Ascending aorta (tissue), 2 donors: ENCODE measurements at regions of chr18 and their contacts with region 1.

Region 1: DNA sequence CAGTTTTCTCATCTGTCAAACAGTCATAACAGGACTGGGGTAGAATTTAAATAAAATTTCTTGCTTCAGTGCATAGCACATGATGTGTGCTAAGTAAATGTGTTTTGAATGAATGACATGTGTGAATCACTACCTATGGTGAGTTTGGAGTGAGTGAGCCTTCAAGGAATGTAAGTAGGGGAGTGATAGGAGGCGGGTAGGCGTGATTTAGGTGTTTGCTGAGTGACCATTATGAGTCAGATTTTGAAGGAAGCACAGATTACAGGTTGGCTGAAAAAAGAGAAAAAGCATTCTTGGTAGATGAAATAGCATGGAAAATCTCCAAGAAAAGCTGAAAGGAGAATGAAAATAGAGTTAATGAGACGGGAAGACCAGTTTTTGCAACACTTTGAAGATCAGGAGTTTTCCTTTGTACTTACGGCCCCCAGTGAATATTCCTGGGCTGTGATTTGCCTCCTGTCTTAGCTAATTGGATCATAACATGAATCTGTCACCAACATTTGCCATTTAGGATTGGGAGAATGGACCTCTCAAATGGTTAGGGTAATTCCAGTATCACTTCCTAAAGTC is 136.9 kb upstream of the GATA6 start:
- DNase-seq: no peak
- H3K4me3 ChIP-seq: no peak overlapping the region
- H3K27ac ChIP-seq: no peak overlapping the region
- H3K4me1 ChIP-seq: no peaks in the 10 kb centered on the region
- H3K27me3 ChIP-seq: no peaks in the 10 kb centered on the region
- CTCF ChIP-seq: no peak

Region 2: DNA sequence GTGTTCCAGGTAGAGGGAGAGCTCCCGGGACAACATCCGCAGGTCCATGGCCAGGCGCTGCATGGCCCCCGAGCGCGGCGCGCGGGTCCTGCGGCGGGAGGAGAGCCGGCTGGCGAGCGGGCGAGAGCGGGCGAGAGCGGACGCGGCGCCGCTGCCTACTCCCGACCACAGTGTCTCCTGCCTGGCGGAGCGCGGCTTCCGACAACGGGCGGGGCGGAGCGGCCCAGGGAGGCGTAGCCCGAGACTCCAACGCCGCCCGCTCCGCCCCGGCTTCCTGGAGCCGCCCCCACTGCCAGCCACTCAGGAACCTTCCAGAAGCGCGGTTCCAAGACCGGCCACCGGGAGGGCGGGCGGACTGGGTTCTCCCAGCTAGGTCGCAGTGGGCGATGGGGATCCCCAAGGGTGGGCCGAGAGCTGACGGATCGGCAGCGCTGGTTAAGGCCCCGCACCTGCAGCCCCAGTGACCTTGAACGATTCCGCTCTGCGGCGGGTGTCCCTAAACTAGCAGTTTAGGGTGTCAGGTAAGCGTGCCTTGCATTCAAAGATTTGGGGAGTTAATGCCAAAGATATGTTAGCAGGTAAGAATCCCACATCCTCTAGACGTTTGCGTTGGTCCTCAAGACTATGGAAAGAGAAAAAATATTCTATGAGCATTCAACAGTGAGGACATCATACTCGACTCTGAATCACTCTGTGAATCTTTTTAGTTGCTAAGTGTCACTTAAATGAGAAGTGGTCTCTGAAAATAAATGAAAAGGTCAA is 327.7 kb before region 1 on chr18 and contains the start of gene ABHD3:
- intact Hi-C with region 1: no loop called
- DNase-seq: peak; percentile 73 to 96
- H3K4me3 ChIP-seq: peak within 1 kb of the TSS; percentile 94 to 98
- H3K27ac ChIP-seq: peak within 1 kb of the TSS; percentile 96 to 97
- H3K4me1 ChIP-seq: peaks cover 0 to 2% of the 10 kb centered on the region in 2 donors
- H3K27me3 ChIP-seq: no peaks in the 10 kb centered on the region
- CTCF ChIP-seq: peak; percentile 48 to 83 (median 49)
- total RNA-seq, gene ABHD3: 9.6 TPM

Region 3: GRCh38 chr18:21912339-21913239 is 119.9 kb before region 1 on chr18:
- intact Hi-C with region 1: no loop called
- DNase-seq: no peak
- H3K4me3 ChIP-seq: no peak overlapping the region
- H3K27ac ChIP-seq: no peak overlapping the region
- H3K4me1 ChIP-seq: no peaks in the 10 kb centered on the region
- H3K27me3 ChIP-seq: no peaks in the 10 kb centered on the region
- CTCF ChIP-seq: no peak

Region 4: GRCh38 chr18:22098563-22098989 is 66.1 kb after region 1 on chr18:
- intact Hi-C with region 1: loop called (anchors 10 kb)
- DNase-seq: no peak
- H3K4me3 ChIP-seq: no peak overlapping the region
- H3K27ac ChIP-seq: no peak overlapping the region
- H3K4me1 ChIP-seq: no peaks in the 10 kb centered on the region
- H3K27me3 ChIP-seq: no peaks in the 10 kb centered on the region
- CTCF ChIP-seq: no peak